ENCODE measurements at regions of chr15 and their contacts with region 1.

Region 1: GRCh38 chr15:54519577-54519976 is 541.3 kb downstream of the UNC13C start:
- DNase-seq: no peak
- H3K4me3 ChIP-seq: no peak overlapping the region
- H3K27ac ChIP-seq: no peak overlapping the region
- H3K27me3 ChIP-seq: no peaks in the 10 kb centered on the region
- CTCF ChIP-seq: no peak

Region 2: DNA sequence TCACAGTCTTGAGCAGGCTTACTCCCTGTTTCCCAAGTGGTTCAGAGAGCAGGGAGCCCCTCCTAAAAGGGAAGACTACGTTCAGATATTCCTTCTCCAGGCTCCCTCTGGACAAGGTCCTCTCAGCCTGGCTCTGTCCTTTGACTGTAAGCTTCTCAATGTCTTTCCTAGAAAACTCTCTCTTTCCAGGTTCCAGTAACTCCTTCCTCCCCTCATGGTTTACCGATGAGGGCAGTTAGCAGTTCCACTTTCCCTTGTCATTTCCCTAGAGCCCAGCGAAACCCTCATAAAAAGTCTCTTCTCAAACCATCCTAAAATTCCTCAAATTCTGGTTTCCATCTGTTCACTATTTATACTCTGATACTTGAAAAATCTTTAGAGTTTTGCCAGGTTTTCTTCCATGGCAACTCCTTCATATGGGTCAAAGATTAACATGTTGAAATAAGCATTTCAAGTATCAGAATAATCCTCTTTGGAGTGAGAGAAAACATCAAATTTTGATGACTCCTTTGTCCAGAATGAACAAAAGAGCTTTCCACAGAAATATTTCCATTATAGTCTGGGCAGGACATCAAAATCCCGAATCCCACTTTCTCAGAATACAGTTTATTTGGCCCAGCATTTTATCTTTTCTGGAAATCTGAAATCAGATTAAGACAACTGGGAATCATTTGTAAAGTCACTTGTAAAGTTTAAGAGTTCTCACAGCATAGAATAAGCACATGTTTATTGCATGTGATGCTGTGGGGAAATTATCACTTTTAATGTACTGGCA is 58.1 kb after region 1 on chr15:
- intact Hi-C with region 1: loop called in 1 of 2 experiments (anchors 10 kb)
- DNase-seq: no peak
- H3K4me3 ChIP-seq: no peak overlapping the region
- H3K27ac ChIP-seq: no peak overlapping the region
- H3K27me3 ChIP-seq: peaks cover 0 to 4% (median 0%) of the 10 kb centered on the region in 45 donors
- CTCF ChIP-seq: no peak

Region 3: DNA sequence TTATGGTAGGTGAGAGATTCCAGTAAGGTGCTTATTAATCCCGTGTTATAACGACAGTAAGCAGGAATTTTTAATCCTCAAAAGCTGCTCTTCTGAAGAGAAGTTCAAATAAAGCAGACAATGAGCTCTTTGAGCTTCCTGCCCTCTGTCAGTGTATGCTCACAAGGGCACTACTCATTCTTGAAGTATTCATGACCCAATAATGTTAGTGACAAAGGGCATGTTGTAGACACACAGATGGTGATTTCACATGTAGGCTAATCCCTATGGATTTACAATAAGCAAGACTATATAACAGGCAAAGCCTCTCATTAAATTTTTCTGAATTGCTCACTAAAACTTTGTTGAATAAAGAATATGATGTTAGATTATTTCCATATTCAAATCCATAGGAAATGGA is 98.5 kb after region 1 on chr15:
- intact Hi-C with region 1: no loop called
- DNase-seq: no peak
- H3K4me3 ChIP-seq: no peak overlapping the region
- H3K27ac ChIP-seq: no peak overlapping the region
- H3K27me3 ChIP-seq: no peaks in the 10 kb centered on the region
- CTCF ChIP-seq: no peak

Measured in dorsolateral prefrontal cortex (tissue), 120 donors.